Posterior vena cava (tissue), 2 donors: ENCODE measurements at regions of chr3 and their contacts with region 1.

Region 1: DNA sequence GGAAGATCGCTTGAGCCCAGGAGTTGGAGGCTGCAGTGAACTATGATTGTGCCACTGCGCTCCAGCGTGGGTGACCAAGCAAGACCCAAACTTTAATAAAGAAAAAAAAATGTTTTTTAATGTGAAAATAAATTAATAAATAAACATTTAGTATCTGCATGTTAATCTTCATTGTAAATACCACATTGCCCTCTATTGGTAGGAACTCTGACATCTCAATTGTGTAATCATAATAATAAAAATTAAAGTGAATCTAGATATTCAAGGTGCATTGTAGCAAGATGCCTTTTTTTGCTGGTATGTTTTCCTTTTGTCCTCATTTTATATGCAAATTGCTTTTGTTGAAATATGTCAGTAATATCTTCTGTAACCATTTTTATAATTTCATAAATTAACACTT is 95.0 kb upstream of the LIMD1 start:
- DNase-seq: no peak

Region 2: GRCh38 chr3:45224824-45225464 is 274.6 kb before region 1 on chr3:
- intact Hi-C with region 1: loop called in 1 of 2 experiments (anchors 5 kb)
- DNase-seq: peak; percentile 90